ENCODE measurements at regions of chr17 and their contacts with region 1.

Region 1: DNA sequence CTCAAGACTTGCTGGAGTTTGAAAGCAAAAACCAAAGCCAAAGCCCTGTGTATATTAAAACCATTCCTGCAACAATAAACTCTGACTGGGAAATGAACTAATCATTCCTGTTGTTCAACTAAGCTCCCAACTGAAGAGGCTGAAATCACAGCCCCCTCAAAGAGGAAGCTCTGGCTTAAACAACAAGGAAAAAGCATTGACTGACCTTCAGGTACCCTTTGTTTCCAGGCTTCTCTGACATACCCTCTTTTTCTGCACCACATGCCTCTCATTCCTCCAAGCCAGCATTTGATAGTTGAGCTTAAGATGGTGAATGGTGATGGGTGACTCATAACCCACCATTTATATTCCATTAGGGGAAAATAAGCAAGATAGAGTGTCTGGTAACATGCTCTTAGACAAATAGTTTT is 470.9 kb upstream of the SOX9 start:
- DNase-seq: no peak
- H3K4me3 ChIP-seq: no peak overlapping the region
- H3K27ac ChIP-seq: no peak overlapping the region
- H3K4me1 ChIP-seq: no peaks in the 10 kb centered on the region
- H3K27me3 ChIP-seq: no peaks in the 10 kb centered on the region
- CTCF ChIP-seq: no peak

Region 2: GRCh38 chr17:71558901-71559300 is 91.0 kb before region 1 on chr17:
- CTCF ChIA-PET with region 1: no interaction called
- dilution Hi-C with region 1: no loop called
- in situ Hi-C with region 1: no loop called
- intact Hi-C with region 1: no loop called
- DNase-seq: no peak
- H3K4me3 ChIP-seq: no peak overlapping the region
- H3K27ac ChIP-seq: no peak overlapping the region
- H3K4me1 ChIP-seq: no peaks in the 10 kb centered on the region
- H3K27me3 ChIP-seq: no peaks in the 10 kb centered on the region
- CTCF ChIP-seq: no peak

Region 3: GRCh38 chr17:71959154-71959553 is 309.2 kb after region 1 on chr17:
- CTCF ChIA-PET with region 1: interaction called, 30 read pairs
- dilution Hi-C with region 1: no loop called
- in situ Hi-C with region 1: no loop called
- intact Hi-C with region 1: no loop called
- DNase-seq: no peak
- H3K4me3 ChIP-seq: no peak overlapping the region
- H3K27ac ChIP-seq: no peak overlapping the region
- H3K4me1 ChIP-seq: no peaks in the 10 kb centered on the region
- H3K27me3 ChIP-seq: no peaks in the 10 kb centered on the region
- CTCF ChIP-seq: peak; percentile 52 to 71

Measured in mammary epithelial cell (primary cell).